Lower leg skin (tissue), 4 donors: ENCODE measurements at regions of chr3 and their contacts with region 1.

Region 1: GRCh38 chr3:18111796-18112232 is 313.3 kb downstream of the SATB1 start:
- DNase-seq: no peak
- H3K4me3 ChIP-seq: no peak overlapping the region
- CTCF ChIP-seq: no peak
- POLR2A ChIP-seq: no peak

Region 2: GRCh38 chr3:17469520-17469919 is 642.3 kb before region 1 on chr3:
- intact Hi-C with region 1: loop called (anchors 5 kb)
- DNase-seq: no peak
- H3K4me3 ChIP-seq: no peak overlapping the region
- CTCF ChIP-seq: no peak
- POLR2A ChIP-seq: no peak

Region 3: DNA sequence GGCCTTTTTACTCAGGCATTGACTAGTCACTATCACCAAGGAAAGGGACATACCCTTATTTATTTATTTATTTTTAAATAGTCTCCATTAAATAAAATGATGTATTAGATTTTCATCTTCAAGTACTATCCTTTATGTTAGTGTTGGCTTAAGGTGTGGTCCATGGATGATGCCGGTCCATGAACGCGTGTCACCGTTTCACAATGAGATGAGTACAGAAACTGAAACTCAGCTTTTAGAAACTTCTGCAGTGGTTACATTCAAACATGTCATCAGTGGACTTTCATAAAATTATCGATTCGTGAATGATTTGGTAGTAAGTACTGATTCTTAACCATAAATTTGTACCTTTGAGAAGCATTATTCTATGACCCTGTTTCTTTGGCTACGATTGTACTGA is 146.7 kb after region 1 on chr3:
- intact Hi-C with region 1: no loop called
- DNase-seq: no peak
- H3K4me3 ChIP-seq: no peak overlapping the region
- CTCF ChIP-seq: no peak
- POLR2A ChIP-seq: no peak